CD8-positive, alpha-beta T cell (primary cell): ENCODE measurements at regions of chr3 and their contacts with region 1.

Region 1: DNA sequence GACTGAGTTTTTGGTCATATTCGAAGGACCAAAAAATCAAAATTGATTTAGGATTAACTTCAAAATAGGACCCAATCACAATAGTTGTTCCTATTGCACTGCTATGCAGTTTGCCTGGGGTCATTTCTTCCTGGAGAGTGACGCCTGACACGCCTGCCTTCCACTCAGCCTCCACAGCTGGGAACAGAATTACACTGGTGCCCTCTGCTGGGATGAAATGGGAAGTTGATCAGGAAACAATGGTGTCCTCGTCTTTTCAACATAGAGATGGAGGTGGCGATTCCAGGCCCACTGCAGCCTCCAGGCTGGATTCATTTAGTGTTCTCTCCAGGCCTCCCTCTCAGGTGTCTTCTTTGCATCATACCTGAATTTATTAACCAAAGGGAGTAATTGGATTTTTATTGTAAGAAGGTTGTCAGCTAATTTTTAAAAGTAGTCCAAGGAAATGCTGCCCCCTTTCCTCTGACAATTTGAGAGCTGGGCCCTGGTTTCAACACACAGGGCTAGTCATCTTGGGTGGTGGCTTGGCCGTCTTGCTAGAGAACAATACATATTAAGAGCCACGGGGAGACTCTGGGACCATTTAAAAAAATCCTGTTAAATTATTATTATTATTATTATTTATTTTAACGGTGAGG is 69.7 kb downstream of the GAP43 start:
- DNase-seq: peak; percentile 37 to 77 (median 67)
- ATAC-seq: peak; percentile 88
- H3K4me3 ChIP-seq: no peak overlapping the region
- H3K4me3 Mint-ChIP-seq: no peak overlapping the region
- H3K27ac ChIP-seq: no peak overlapping the region
- H3K27ac Mint-ChIP-seq: no peak overlapping the region
- H3K4me1 ChIP-seq: no peaks in the 10 kb centered on the region
- H3K4me1 Mint-ChIP-seq: peaks cover 3% of the 10 kb centered on the region
- H3K27me3 ChIP-seq: no peaks in the 10 kb centered on the region
- H3K27me3 Mint-ChIP-seq: peaks cover 3% of the 10 kb centered on the region
- CTCF ChIP-seq: peak; percentile 69

Region 2: DNA sequence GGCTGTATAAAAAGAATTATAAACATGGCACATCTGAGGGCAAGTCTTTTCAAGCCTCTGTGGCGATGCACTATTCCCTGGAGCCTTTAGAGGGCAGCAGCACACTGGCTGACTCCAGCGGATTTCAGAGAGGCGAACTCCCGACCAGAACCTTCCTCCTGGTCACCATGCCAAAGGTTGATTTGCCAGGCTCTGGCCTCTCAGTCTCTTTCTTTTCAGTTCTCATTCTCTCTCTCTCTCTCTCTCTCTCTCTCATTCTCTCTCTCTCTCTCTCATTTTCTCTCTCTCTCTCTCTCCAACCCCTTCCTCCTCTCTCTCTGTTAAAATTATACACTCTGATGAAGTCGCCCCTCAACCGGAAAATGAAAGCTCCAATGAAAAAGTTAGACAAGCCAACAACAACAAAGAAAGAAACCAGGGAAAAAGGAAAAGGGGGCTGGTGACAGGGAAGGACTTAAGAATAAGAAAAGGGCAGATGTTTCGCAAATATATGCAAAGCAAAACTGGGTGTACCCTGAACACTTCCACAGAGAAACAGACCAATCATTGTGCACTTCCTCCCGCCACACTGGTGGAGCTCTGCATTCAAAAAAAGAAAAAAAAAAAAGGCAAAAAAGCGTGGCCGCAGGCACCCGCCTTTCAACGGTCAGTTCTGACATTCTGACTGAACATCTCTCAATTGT is 1309.0 kb before region 1 on chr3:
- CTCF ChIA-PET with region 1: no interaction called
- POLR2A ChIA-PET with region 1: no interaction called
- intact Hi-C with region 1: loop called in 1 of 2 experiments (anchors 10 kb)
- DNase-seq: peak; percentile 34 to 78 (median 65)
- ATAC-seq: peak; percentile 97
- H3K4me3 ChIP-seq: peak overlapping the region; percentile 30 to 44
- H3K4me3 Mint-ChIP-seq: peak overlapping the region; percentile 82
- H3K27ac ChIP-seq: peak overlapping the region in 1 of 2 experiments; percentile 43
- H3K27ac Mint-ChIP-seq: peak overlapping the region; percentile 82
- H3K4me1 ChIP-seq: peaks cover 6% of the 10 kb centered on the region
- H3K4me1 Mint-ChIP-seq: peaks cover 18% of the 10 kb centered on the region
- H3K27me3 ChIP-seq: no peaks in the 10 kb centered on the region
- H3K27me3 Mint-ChIP-seq: no peaks in the 10 kb centered on the region
- CTCF ChIP-seq: peak; percentile 91

Region 3: GRCh38 chr3:115040673-115041286 is 652.2 kb before region 1 on chr3:
- CTCF ChIA-PET with region 1: no interaction called
- POLR2A ChIA-PET with region 1: no interaction called
- intact Hi-C with region 1: loop called (anchors 1 to 2 kb)
- DNase-seq: peak in 8 of 9 experiments; percentile 1 to 62 (median 33)
- ATAC-seq: peak; percentile 69
- H3K4me3 ChIP-seq: no peak overlapping the region
- H3K4me3 Mint-ChIP-seq: no peak overlapping the region
- H3K27ac ChIP-seq: no peak overlapping the region
- H3K27ac Mint-ChIP-seq: no peak overlapping the region
- H3K4me1 ChIP-seq: no peaks in the 10 kb centered on the region
- H3K4me1 Mint-ChIP-seq: peaks cover 12% of the 10 kb centered on the region
- H3K27me3 ChIP-seq: no peaks in the 10 kb centered on the region
- H3K27me3 Mint-ChIP-seq: no peaks in the 10 kb centered on the region
- CTCF ChIP-seq: peak; percentile 70

Region 4: GRCh38 chr3:115217678-115218451 is 475.1 kb before region 1 on chr3:
- CTCF ChIA-PET with region 1: interaction called, 4 read pairs
- POLR2A ChIA-PET with region 1: no interaction called
- intact Hi-C with region 1: loop called (anchors 1 to 5 kb)
- DNase-seq: peak in 3 of 9 experiments; percentile 14 to 51 (median 43)
- ATAC-seq: no peak
- H3K4me3 ChIP-seq: no peak overlapping the region
- H3K4me3 Mint-ChIP-seq: no peak overlapping the region
- H3K27ac ChIP-seq: no peak overlapping the region
- H3K27ac Mint-ChIP-seq: no peak overlapping the region
- H3K4me1 ChIP-seq: no peaks in the 10 kb centered on the region
- H3K4me1 Mint-ChIP-seq: no peaks in the 10 kb centered on the region
- H3K27me3 ChIP-seq: no peaks in the 10 kb centered on the region
- H3K27me3 Mint-ChIP-seq: peaks cover 2% of the 10 kb centered on the region
- CTCF ChIP-seq: peak; percentile 38

Region 5: DNA sequence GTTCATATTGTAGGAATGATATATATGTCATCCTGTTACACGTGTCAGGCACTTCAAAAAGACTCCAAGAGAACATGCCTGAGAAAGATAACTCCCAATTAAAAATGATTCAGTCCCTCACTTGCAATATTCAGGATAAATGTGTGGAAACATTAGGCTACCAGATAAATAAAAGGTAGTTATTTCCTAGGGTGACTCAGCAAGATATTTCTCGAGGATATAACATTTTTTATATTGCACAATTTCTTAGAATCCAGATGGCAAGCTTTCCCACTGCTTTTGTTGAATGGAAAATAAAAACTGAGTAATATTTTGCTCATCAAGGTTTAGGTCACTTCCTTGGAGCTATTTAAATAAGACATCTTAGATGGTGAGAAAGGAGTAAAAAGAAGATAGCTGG is 111.7 kb after region 1 on chr3:
- CTCF ChIA-PET with region 1: no interaction called
- POLR2A ChIA-PET with region 1: no interaction called
- intact Hi-C with region 1: no loop called
- DNase-seq: no peak
- ATAC-seq: no peak
- H3K4me3 ChIP-seq: no peak overlapping the region
- H3K4me3 Mint-ChIP-seq: no peak overlapping the region
- H3K27ac ChIP-seq: no peak overlapping the region
- H3K27ac Mint-ChIP-seq: no peak overlapping the region
- H3K4me1 ChIP-seq: no peaks in the 10 kb centered on the region
- H3K4me1 Mint-ChIP-seq: no peaks in the 10 kb centered on the region
- H3K27me3 ChIP-seq: no peaks in the 10 kb centered on the region
- H3K27me3 Mint-ChIP-seq: peaks cover 29% of the 10 kb centered on the region
- CTCF ChIP-seq: no peak

Region 6: DNA sequence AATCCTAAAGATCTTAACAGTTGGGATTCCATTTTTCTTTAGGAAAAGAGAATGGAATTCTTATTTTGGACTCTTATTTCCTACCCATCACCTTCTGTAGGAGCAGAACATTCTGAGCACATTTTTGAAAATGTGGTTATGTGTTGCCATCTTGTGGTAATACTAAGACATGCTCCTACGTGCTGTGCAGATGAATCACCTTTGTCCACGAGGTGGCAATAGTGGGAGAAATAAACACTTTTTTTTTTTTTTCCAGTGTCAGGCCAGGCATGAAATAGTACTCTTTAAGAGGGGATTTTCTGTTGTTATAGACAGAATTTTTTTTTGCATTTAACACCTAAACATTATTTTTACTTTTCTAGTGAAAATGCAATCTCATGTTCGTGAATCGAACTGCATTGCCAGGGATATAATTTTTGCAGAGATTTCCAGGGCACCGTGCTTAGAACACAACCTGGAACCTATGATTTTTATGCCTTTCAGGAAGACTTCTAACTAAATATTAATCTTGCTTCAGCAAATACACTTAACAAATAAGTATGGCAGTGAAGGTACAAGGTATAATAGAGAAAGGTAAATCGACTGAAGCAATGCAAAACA is 126.9 kb after region 1 on chr3:
- CTCF ChIA-PET with region 1: no interaction called
- POLR2A ChIA-PET with region 1: no interaction called
- intact Hi-C with region 1: loop called (anchors 2 kb)
- DNase-seq: peak; percentile 26 to 88 (median 56)
- ATAC-seq: peak; percentile 91
- H3K4me3 ChIP-seq: no peak overlapping the region
- H3K4me3 Mint-ChIP-seq: no peak overlapping the region
- H3K27ac ChIP-seq: no peak overlapping the region
- H3K27ac Mint-ChIP-seq: no peak overlapping the region
- H3K4me1 ChIP-seq: no peaks in the 10 kb centered on the region
- H3K4me1 Mint-ChIP-seq: no peaks in the 10 kb centered on the region
- H3K27me3 ChIP-seq: peaks cover 0 to 3% of the 10 kb centered on the region in 2 experiments
- H3K27me3 Mint-ChIP-seq: no peaks in the 10 kb centered on the region
- CTCF ChIP-seq: peak; percentile 100